ENCODE measurements at regions of chr17 and their contacts with region 1.

Region 1: GRCh38 chr17:72523491-72523890 is 402.7 kb downstream of the SOX9 start:
- DNase-seq: no peak
- H3K4me3 ChIP-seq: no peak overlapping the region
- H3K27ac ChIP-seq: no peak overlapping the region
- H3K4me1 ChIP-seq: no peaks in the 10 kb centered on the region
- H3K27me3 ChIP-seq: no peaks in the 10 kb centered on the region
- CTCF ChIP-seq: no peak

Region 2: DNA sequence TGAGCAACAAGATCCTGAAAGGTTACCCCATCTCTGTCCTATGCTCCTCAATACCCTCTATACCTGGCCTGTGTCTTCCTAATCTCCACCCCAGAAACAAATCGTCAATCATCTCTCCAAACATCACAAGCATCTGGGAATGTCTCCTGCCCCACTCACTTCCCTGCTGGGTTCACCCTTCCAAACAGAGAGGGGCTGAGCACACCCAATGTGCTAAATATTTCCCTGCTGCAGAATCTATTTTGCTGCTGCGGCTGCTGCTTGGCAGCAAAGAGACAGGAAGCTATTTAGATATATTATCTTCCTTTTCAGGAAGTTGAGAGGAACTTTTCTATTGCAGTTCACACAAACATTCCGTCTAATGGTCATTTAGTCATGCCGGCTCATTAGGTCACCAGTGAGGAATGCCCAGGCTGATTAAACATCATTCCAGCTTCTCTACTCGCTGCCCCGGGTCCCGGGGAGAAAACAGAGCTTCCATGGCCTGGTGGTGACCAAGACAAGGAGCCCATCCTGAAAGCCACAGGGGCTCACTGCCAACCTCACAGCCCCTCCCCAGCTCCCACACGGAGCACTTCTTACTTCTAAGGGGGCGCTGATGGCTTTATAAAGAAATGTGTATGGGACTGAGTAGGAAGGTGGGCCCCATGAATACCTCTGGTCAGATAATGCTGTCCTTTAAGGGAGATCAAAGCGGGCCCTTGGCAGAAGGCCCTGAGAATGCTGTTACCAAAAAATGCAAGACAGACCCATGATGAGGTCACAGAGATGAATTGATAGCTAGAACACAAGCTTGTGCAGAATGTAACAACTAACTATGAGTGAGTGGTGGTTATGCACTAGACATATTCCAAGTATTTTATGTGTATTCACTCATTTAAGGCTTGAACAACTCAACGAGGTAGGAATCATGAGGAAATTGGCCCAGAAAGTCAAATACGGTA is 184.4 kb before region 1 on chr17:
- CTCF ChIA-PET with region 1: no interaction called
- POLR2A ChIA-PET with region 1: no interaction called
- intact Hi-C with region 1: no loop called
- DNase-seq: peak; percentile 81 to 97
- H3K4me3 ChIP-seq: no peak overlapping the region; the same call in 1 of the 2 replicates
- H3K27ac ChIP-seq: peak overlapping the region; percentile 88
- H3K4me1 ChIP-seq: peaks cover 34% of the 10 kb centered on the region
- H3K27me3 ChIP-seq: no peaks in the 10 kb centered on the region
- CTCF ChIP-seq: no peak

Region 3: GRCh38 chr17:72472106-72472505 is 51.4 kb before region 1 on chr17:
- CTCF ChIA-PET with region 1: no interaction called
- POLR2A ChIA-PET with region 1: no interaction called
- intact Hi-C with region 1: loop called (anchors 2 kb)
- DNase-seq: no peak
- H3K4me3 ChIP-seq: no peak overlapping the region
- H3K27ac ChIP-seq: no peak overlapping the region
- H3K4me1 ChIP-seq: peaks cover 48% of the 10 kb centered on the region
- H3K27me3 ChIP-seq: no peaks in the 10 kb centered on the region
- CTCF ChIP-seq: no peak